PC-3 (cell line): ENCODE measurements at regions of chr1 and their contacts with region 1.

Region 1: DNA sequence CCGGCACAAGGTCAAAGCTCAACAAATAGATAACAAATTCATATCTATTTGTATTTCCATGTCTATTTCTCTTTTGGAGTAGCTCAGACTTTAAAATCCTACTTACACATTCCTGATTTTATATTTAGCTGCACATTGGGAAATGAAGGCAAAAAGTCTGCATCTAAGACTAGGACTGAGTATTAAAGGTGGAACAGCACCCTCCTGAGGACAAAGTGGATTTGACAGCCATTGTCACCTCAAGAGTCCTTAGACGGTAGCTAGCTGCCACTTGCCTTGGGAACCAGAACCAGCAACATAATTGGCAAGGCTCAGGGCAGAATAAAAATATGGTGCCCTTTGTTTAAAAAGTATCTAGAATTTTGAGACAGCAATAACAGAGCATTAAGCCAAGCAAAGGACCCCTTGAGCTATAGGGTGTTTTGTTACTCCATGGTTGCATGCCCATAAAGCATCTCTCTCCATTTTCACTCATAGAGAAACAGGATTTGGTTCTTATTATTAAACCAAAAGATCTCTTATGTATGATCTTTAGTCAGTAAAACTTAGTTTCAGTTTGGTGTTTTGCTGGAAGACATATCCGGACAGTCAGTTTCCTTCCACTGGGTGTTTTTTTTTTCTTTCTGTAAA is 30.0 kb upstream of the SGIP1 start:
- DNase-seq: peak; percentile 85
- ATAC-seq: peak; percentile 88
- H3K4me3 ChIP-seq: 0 out of 2 replicates have a peak overlapping the region, but pooled peaks have one; percentile 18
- H3K27ac ChIP-seq: no peak overlapping the region
- H3K4me1 ChIP-seq: no peaks in the 10 kb centered on the region
- H3K27me3 ChIP-seq: peaks cover 42% of the 10 kb centered on the region
- CTCF ChIP-seq: peak; percentile 88

Region 2: GRCh38 chr1:66446261-66447001 is 57.5 kb before region 1 on chr1:
- CTCF ChIA-PET with region 1: interaction called, 7 read pairs
- POLR2A ChIA-PET with region 1: interaction called, 3 read pairs
- intact Hi-C with region 1: loop called (anchors 1 kb)
- DNase-seq: peak; percentile 86
- ATAC-seq: peak; percentile 60
- H3K4me3 ChIP-seq: no peak overlapping the region
- H3K27ac ChIP-seq: no peak overlapping the region
- H3K4me1 ChIP-seq: no peaks in the 10 kb centered on the region
- H3K27me3 ChIP-seq: no peaks in the 10 kb centered on the region
- CTCF ChIP-seq: peak; percentile 77

Region 3: DNA sequence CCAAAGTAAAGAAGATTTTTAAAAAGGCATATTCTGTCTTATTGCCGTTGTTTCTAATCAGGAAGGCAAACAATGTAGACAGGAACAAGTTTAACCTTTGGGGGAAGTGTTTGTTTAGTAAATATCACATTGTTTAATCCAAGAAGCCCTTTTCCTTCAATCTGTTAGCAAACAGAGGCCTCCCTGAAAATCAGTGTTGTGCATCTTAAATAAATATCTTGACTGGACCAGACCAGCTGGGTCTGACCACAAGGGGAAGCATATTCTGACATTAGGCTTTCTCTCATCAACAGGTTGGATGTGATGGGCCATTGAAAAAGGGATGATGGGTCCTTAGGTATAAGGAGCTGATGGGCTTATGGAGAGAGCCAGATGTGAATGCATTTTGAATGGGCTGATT is 51.8 kb before region 1 on chr1:
- CTCF ChIA-PET with region 1: no interaction called
- POLR2A ChIA-PET with region 1: no interaction called
- intact Hi-C with region 1: loop called (anchors 1 kb)
- DNase-seq: peak; percentile 44
- ATAC-seq: peak; percentile 72
- H3K4me3 ChIP-seq: no peak overlapping the region
- H3K27ac ChIP-seq: no peak overlapping the region
- H3K4me1 ChIP-seq: no peaks in the 10 kb centered on the region
- H3K27me3 ChIP-seq: no peaks in the 10 kb centered on the region
- CTCF ChIP-seq: peak; percentile 46